ENCODE measurements at regions of chr2 and their contacts with region 1.

Region 1: GRCh38 chr2:157784169-157784822 is 91.8 kb downstream of the ACVR1 start:
- DNase-seq: peak; percentile 66
- ATAC-seq: peak; percentile 81
- H3K4me3 ChIP-seq: no peak overlapping the region
- H3K27ac ChIP-seq: no peak overlapping the region
- H3K4me1 ChIP-seq: peaks cover 47% of the 10 kb centered on the region
- H3K27me3 ChIP-seq: no peaks in the 10 kb centered on the region
- CTCF ChIP-seq: no peak

Region 2: GRCh38 chr2:157838442-157839161 is 54.3 kb after region 1 on chr2:
- intact Hi-C with region 1: no loop called
- DNase-seq: no peak
- ATAC-seq: peak; percentile 88
- H3K4me3 ChIP-seq: peak overlapping the region; percentile 38
- H3K27ac ChIP-seq: peak overlapping the region; percentile 79
- H3K4me1 ChIP-seq: peaks cover 60% of the 10 kb centered on the region
- H3K27me3 ChIP-seq: no peaks in the 10 kb centered on the region
- CTCF ChIP-seq: no peak

Region 3: GRCh38 chr2:157876066-157876787 is 91.9 kb after region 1 on chr2 and contains the start of gene ACVR1:
- intact Hi-C with region 1: loop called (anchors 10 kb)
- DNase-seq: peak; percentile 97
- ATAC-seq: peak; percentile 96
- H3K4me3 ChIP-seq: peak within 1 kb of the TSS; percentile 77
- H3K27ac ChIP-seq: peak within 1 kb of the TSS; percentile 94
- H3K4me1 ChIP-seq: peaks cover 21% of the 10 kb centered on the region
- H3K27me3 ChIP-seq: no peaks in the 10 kb centered on the region
- CTCF ChIP-seq: peak; percentile 18
- total RNA-seq, gene ACVR1: 34.4 TPM